Activated naive CD4-positive, alpha-beta T cell treated with anti-CD3 and anti-CD28 coated beads, Interleukin-2, amount 10 ng/mL, durations not matched to agents 7 days and 5 days (primary cell): ENCODE measurements at regions of chr6 and their contacts with region 1.

Region 1: GRCh38 chr6:28496099-28496779 is 19.4 kb downstream of the GPX6 start:
- DNase-seq: no peak
- H3K4me3 Mint-ChIP-seq: no peak overlapping the region
- H3K27ac Mint-ChIP-seq: no peak overlapping the region
- H3K4me1 Mint-ChIP-seq: peaks cover 5% of the 10 kb centered on the region
- H3K27me3 Mint-ChIP-seq: peaks cover 38% of the 10 kb centered on the region

Region 2: DNA sequence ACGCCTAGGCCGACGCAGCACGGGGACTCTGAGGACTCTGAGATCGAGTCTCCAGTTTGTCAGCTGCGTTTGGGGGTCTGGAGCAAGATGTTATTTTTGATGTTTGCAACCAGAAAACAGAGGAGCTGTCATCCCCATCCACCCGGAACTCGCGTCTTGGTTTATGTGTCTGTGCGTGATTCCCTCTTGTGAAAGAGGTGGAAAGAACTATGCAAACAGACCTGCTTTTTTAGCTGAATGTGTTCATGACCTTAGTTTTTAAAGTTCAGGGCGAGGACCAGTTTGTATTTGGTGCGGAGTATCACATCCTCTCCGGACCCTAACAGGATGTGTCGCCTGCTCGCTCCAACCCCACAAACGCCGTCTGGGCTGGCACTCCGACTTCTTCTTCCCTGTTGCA is 17.2 kb before region 1 on chr6:
- CTCF ChIA-PET with region 1: no interaction called
- DNase-seq: no peak
- H3K4me3 Mint-ChIP-seq: peak overlapping the region; percentile 11
- H3K27ac Mint-ChIP-seq: no peak overlapping the region
- H3K4me1 Mint-ChIP-seq: peaks cover 16% of the 10 kb centered on the region
- H3K27me3 Mint-ChIP-seq: peaks cover 68% of the 10 kb centered on the region

Region 3: GRCh38 chr6:28580475-28580874 is 84.2 kb after region 1 on chr6:
- CTCF ChIA-PET with region 1: interaction called, 22 read pairs
- DNase-seq: no peak
- H3K4me3 Mint-ChIP-seq: no peak overlapping the region
- H3K27ac Mint-ChIP-seq: no peak overlapping the region
- H3K4me1 Mint-ChIP-seq: no peaks in the 10 kb centered on the region
- H3K27me3 Mint-ChIP-seq: peaks cover 8% of the 10 kb centered on the region

Region 4: DNA sequence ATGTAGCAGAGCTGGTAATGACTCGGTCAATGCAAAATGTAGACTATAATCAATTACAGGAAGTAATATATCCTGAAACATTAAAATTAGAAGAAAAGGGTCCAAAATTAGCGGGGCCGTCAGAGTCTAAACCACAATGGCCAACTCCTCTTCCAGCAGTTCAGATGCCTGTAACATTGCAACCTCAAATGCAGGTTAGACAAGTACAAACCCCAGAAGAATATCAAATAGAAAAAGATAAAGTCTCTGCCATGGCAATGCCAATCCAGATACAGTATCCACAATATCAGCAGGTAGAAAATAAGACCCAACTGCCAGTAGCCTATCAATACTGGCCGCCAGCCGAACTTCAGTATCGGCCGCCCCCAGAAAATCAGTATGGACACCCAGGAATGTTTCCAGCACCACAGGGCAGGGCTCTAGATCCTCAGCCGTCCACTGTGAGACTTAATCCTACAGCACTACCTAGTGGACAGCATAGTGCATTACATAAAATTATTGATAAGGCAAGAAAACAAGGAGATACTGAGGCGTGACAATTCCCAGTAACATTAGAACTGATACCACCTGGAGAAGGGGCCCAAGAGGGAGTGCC is 187.8 kb after region 1 on chr6:
- CTCF ChIA-PET with region 1: interaction called, 18 read pairs
- DNase-seq: no peak
- H3K4me3 Mint-ChIP-seq: no peak overlapping the region
- H3K27ac Mint-ChIP-seq: no peak overlapping the region
- H3K4me1 Mint-ChIP-seq: peaks cover 20% of the 10 kb centered on the region
- H3K27me3 Mint-ChIP-seq: peaks cover 54% of the 10 kb centered on the region